Esophagus muscularis mucosa (tissue), 4 donors: ENCODE measurements at regions of chr4 and their contacts with region 1.

Region 1: DNA sequence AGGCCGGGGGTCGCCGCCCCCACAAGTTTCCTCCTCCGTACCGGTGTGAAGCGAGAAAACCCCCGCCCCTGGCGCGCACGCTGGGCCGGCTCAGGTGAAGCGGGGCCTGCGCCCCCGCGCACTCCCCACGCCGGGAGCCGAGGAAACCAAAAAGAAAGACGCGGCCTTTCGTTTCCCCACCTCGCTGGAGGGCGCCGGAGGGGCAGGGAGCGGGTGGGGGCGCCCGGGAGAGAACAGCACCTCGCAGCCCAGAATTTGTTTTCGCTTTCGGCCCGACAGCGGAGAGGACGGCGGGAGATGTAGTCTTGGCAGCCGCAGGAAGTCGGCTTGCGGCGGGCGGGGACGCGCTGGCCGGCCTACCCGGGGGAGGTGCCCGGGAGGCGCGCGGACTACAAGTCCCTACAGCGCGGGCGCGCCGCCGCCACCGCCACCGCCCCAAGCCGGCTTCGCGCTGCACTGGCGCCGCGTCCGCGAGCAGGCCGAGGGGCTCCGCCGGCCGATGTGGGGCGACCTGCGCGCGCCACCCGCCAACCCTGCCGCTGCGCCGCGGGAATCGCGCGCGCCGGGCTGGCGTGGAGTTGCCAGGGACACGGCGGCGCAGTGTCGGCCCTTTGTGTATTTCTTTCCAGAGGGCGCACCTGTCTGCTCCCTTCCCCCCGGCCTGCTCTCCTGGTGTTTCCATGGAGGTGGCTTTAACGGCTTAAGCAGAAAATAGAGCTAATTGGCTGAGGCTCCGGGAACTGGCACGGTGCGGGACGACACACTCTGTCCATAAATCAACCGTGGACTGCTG is at the start of gene OTUD4:
- DNase-seq: peak; percentile 98
- H3K4me3 ChIP-seq: peak within 1 kb of the TSS; percentile 71 to 91 (median 86)
- H3K27ac ChIP-seq: peak within 1 kb of the TSS; percentile 96 to 98 (median 98)
- H3K4me1 ChIP-seq: peaks cover 21 to 43% (median 39%) of the 10 kb centered on the region in 4 donors
- H3K27me3 ChIP-seq: no peaks in the 10 kb centered on the region
- CTCF ChIP-seq: peak in 1 of 3 experiments; percentile 7
- EP300 ChIP-seq: no peak
- POLR2A ChIP-seq: peak; percentile 51
- total RNA-seq, gene OTUD4: 29.8 to 49.1 (median 38.3) TPM

Region 2: GRCh38 chr4:144189121-144189520 is 991.4 kb before region 1 on chr4:
- intact Hi-C with region 1: no loop called
- DNase-seq: no peak
- H3K4me3 ChIP-seq: no peak overlapping the region
- H3K27ac ChIP-seq: no peak overlapping the region
- H3K4me1 ChIP-seq: no peaks in the 10 kb centered on the region
- H3K27me3 ChIP-seq: no peaks in the 10 kb centered on the region
- CTCF ChIP-seq: no peak
- EP300 ChIP-seq: no peak
- POLR2A ChIP-seq: no peak

Region 3: DNA sequence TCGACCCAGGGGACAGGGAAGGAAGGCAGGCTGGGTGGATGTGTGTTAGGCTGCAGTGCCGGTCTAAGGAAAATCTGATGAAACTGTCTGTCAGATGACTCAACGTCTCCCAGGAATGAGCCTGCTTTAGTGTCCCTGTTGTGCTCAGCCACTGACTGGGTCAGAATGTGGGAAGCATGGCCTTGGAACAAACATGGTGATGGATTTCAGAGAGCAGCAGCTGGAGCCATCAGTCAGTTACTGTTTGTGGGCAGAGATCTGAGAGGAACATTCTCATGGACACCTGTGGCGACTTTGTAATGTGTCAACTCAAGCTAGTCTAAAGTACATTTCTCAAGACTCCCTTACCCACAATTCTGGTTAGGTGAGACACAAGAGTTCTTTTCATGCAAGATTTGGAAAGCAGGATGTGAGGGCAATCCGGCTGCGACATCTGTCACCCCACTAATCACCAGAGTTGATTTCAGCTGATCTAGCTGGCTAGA is 145.7 kb before region 1 on chr4:
- intact Hi-C with region 1: no loop called
- DNase-seq: no peak
- H3K4me3 ChIP-seq: no peak overlapping the region
- H3K27ac ChIP-seq: no peak overlapping the region
- H3K4me1 ChIP-seq: no peaks in the 10 kb centered on the region
- H3K27me3 ChIP-seq: no peaks in the 10 kb centered on the region
- CTCF ChIP-seq: no peak
- EP300 ChIP-seq: no peak
- POLR2A ChIP-seq: no peak

Region 4: GRCh38 chr4:145097821-145098674 is 82.4 kb before region 1 on chr4 and contains the starts of genes ABCE1 and ANAPC10:
- intact Hi-C with region 1: loop called (anchors 5 kb)
- DNase-seq: peak; percentile 98
- H3K4me3 ChIP-seq: peak within 1 kb of the TSS; percentile 71 to 88 (median 82)
- H3K27ac ChIP-seq: peak within 1 kb of the TSS; percentile 90 to 92 (median 91)
- H3K4me1 ChIP-seq: peaks cover 26 to 58% (median 49%) of the 10 kb centered on the region in 4 donors
- H3K27me3 ChIP-seq: no peaks in the 10 kb centered on the region
- CTCF ChIP-seq: peak; percentile 1 to 28 (median 26)
- EP300 ChIP-seq: no peak
- POLR2A ChIP-seq: peak; percentile 25
- total RNA-seq, gene ABCE1: 35.7 to 78.4 (median 42.5) TPM
- total RNA-seq, gene ANAPC10: 17.8 to 32.0 (median 21.3) TPM

Region 5: DNA sequence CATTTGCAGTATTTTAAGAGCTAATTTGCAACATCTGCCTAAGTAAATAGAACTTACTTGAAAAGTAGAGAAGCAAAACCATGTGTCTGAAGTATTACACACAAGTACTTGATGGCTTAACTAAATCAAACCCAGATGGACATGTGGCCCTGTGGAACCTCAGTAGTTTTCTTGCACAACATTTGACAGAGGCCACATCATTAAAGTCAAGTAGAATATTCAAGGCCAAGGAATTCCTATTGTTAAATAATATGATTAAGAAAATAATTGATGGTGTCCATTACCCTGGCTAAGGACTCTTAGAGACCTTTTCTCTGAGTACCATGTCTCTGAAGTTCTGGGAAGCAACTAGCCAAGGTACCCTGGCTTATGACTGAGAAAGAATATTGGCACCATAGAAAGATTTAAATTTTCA is 135.3 kb after region 1 on chr4:
- intact Hi-C with region 1: no loop called
- DNase-seq: no peak
- H3K4me3 ChIP-seq: no peak overlapping the region
- H3K27ac ChIP-seq: no peak overlapping the region
- H3K4me1 ChIP-seq: no peaks in the 10 kb centered on the region
- H3K27me3 ChIP-seq: no peaks in the 10 kb centered on the region
- CTCF ChIP-seq: no peak
- EP300 ChIP-seq: no peak
- POLR2A ChIP-seq: no peak

Region 6: DNA sequence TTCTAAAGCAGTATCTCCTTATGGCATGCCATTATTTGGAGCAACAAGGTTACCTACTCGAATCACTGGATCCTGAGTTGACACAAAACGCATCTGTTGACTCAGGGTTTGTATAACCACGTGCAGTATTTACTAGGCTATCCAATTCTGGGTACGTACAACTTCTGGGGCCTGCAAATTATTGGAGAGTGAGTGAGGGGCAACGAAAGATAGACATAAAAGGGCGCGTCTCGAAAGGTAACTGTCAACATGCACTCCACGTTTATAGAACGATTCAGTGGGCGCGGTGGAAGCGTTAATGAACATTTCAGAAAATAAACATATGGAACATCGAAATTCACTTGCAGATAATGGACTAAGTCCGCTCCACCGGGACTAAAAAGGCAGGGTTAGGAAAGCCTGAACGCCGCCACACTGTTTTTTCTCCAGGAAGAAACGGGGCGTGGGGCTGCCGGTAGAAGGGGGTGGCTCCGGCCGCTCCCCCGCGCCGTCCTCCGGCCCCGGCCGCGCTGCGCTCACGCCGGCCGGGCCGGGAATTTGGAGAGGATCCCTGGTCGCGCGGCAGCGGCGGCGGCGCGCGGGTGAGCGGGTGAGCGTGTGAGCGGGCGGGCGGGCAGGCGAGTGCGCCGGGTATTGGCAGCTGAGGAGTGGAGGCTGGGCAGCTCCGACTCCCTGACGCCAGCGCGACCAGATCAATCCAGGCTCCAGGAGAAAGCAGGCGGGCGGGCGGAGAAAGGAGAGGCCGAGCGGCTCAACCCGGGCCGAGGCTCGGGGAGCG is 300.9 kb after region 1 on chr4 and contains the start of gene SMAD1:
- intact Hi-C with region 1: loop called (anchors 10 kb)
- DNase-seq: peak; percentile 93
- H3K4me3 ChIP-seq: peak within 1 kb of the TSS; percentile 76 to 99 (median 96)
- H3K27ac ChIP-seq: peak within 1 kb of the TSS; percentile 95 to 99 (median 96)
- H3K4me1 ChIP-seq: peaks cover 15 to 43% (median 40%) of the 10 kb centered on the region in 4 donors
- H3K27me3 ChIP-seq: no peaks in the 10 kb centered on the region
- CTCF ChIP-seq: no peak
- EP300 ChIP-seq: no peak
- POLR2A ChIP-seq: peak; percentile 62
- total RNA-seq, gene SMAD1: 19.5 to 34.3 (median 29.2) TPM